A549 (cell line): ENCODE measurements at regions of chr14 and their contacts with region 1.

Region 1: DNA sequence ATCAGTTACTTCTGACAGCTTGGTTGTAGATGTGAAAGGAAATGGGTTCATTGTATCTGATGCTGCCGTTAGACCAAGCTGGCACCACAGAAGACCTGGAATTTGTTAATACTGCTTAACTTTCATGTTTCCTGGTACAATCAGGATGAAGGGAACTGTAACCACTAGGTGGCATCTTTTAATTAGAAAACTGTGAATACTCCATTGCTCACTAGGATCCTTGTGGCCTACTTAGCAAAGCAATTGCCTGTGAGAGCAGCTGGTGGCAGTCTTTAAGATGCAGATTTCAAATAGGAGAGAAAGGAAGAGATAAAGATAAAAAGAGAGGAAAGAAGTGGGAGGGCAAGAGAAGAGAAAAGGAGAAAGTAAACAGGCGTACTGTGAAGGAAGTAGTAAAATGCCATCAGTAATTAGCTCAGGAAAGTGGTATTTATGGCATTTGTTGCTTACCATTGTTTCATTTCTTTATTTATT is 114.5 kb downstream of the RAD51B start:
- DNase-seq: peak; percentile 82 to 89
- ATAC-seq: peak; percentile 99
- H3K4me3 ChIP-seq: no peak overlapping the region
- H3K27ac ChIP-seq: peak overlapping the region; percentile 73 to 78
- H3K4me1 ChIP-seq: peaks cover 13% of the 10 kb centered on the region
- CTCF ChIP-seq: peak; percentile 93
- EP300 ChIP-seq: no peak
- POLR2A ChIP-seq: no peak
- RAD21 ChIP-seq: peak; percentile 89 to 93

Region 2: DNA sequence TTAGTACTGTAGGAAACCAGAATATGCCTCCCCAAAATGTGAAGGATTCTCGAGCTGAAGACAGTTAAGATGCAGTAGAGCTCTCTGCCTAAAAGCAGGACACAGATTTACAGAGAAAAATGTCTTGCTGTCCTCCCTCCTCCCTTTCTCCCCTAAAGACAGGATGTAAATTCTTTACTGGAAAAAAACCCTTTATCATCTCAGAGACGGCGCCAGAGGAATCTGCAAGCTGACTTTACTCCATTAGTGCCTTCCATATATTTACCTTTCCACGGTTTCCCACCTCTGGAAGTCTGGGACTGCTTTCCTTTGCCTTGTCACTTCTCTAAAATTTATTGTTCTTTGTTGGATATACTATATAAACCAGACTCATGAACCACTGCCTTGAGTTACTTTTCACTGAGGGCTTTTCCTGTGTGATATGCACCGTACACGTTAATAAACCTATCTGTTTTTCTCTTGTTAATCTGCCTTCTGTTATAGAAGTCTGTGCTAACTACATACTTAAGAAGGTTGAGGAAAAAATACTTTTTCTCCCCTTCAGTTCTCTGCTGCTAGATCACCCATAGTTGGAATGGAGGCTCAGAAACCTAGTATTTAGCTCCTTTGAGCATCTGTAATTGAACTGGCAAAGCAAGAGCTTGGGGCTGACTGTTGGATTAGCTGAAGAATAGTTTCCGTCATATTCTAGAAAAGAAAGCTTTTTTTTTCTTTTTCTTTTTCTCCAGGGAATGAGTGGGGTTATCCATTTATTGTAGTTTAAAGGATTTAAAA is 14.6 kb before region 1 on chr14:
- CTCF ChIA-PET with region 1: interaction called, 15 read pairs
- POLR2A ChIA-PET with region 1: no interaction called
- DNase-seq: no peak
- ATAC-seq: no peak; a peak in 1 of 6 replicates
- H3K4me3 ChIP-seq: no peak overlapping the region
- H3K27ac ChIP-seq: no peak overlapping the region
- H3K4me1 ChIP-seq: no peaks in the 10 kb centered on the region
- CTCF ChIP-seq: no peak
- EP300 ChIP-seq: no peak
- POLR2A ChIP-seq: no peak
- RAD21 ChIP-seq: no peak

Region 3: DNA sequence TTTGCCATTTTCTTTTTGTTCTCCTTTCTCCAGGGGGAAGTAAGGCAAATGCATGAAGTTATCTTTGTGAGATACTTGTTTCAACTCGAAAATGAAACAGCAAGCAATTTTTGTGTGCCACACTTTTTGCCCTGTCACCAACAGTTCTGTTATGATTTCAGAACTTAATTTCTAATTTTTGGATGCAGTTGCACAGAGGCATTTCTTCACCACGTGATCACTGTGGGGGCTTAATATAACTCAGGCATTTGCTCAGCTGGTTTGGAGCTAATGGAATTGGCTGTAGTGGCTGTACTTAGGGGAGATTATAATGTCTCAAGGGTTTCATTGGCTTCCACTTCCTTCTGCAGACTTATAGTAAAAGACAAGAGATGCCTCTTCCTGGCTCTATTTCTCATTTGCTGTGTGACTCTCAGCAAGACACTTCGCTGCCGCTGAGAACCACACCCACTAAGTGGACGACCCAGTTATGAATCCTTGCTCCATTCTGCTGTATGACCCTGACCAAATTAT is 337.9 kb after region 1 on chr14:
- CTCF ChIA-PET with region 1: interaction called, 12 read pairs
- POLR2A ChIA-PET with region 1: no interaction called
- DNase-seq: no peak
- ATAC-seq: no peak
- H3K4me3 ChIP-seq: no peak overlapping the region
- H3K27ac ChIP-seq: peak overlapping the region in 1 of 2 experiments; percentile 47; a peak in 2 of 6 replicates
- H3K4me1 ChIP-seq: peaks cover 4% of the 10 kb centered on the region; the same call in 1 of the 3 replicates
- CTCF ChIP-seq: no peak
- EP300 ChIP-seq: no peak
- POLR2A ChIP-seq: no peak
- RAD21 ChIP-seq: no peak

Region 4: GRCh38 chr14:68834816-68835215 is 900.8 kb after region 1 on chr14:
- CTCF ChIA-PET with region 1: interaction called, 10 read pairs
- POLR2A ChIA-PET with region 1: no interaction called
- DNase-seq: no peak
- ATAC-seq: no peak
- H3K4me3 ChIP-seq: no peak overlapping the region
- H3K27ac ChIP-seq: no peak overlapping the region
- H3K4me1 ChIP-seq: no peaks in the 10 kb centered on the region
- CTCF ChIP-seq: no peak
- EP300 ChIP-seq: no peak
- POLR2A ChIP-seq: no peak
- RAD21 ChIP-seq: no peak